HEK293T (cell line): ENCODE measurements at regions of chr11 and their contacts with region 1.

Region 1: GRCh38 chr11:65329944-65330403 is 3.7 kb upstream of the DPF2 start:
- DNase-seq: peak; percentile 69

Region 2: DNA sequence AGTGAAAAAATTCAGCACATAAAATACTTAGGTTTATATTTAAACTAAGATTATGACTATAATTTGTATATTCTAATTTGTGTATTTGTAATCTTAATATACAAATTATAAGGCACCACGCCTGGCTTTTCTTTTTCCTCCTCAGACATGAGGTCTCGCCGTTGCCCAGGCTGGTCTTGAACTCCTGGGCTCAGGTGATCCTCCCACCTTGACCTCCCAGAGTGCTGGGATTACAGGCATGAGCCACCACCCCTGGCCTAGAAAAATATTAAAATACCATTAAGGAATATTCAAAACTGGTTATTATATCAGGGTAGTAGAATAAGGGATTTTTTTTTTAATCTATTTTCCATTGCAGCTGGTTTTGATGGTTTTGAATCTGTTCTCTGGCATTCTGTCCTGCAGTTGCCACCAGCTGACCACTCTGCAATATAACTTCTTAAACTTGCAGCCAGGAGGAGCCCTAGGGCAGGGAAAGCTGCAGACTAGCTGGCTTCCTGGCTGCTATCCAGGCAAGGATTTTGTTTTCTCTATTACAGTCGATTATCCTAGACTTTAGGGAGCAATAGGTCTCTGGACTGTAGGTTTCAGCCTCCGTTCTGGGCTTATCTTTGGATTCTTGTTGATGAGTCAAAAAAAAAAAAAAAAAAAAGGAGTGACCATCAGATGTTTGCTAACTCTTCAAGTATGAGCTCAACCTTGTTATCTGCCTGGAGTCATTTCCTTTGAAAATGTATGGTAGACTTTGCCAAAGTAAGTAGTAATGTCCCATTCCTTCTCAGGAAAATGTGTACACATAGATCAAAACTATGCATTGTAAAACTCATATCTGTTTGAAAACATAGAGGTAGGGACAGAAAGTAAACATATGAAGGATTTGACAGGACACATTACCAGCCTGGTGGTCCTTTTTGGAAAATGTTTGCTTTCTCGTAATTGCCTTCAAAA is 55.0 kb before region 1 on chr11:
- CTCF ChIA-PET with region 1: interaction called, 17 read pairs
- POLR2A ChIA-PET with region 1: interaction called, 7 read pairs
- DNase-seq: peak; percentile 68

Region 3: GRCh38 chr11:65314501-65315203 is 15.3 kb before region 1 on chr11 and contains the start of gene CDC42EP2:
- CTCF ChIA-PET with region 1: interaction called, 60 read pairs
- POLR2A ChIA-PET with region 1: interaction called, 20 read pairs
- DNase-seq: peak; percentile 89

Region 4: DNA sequence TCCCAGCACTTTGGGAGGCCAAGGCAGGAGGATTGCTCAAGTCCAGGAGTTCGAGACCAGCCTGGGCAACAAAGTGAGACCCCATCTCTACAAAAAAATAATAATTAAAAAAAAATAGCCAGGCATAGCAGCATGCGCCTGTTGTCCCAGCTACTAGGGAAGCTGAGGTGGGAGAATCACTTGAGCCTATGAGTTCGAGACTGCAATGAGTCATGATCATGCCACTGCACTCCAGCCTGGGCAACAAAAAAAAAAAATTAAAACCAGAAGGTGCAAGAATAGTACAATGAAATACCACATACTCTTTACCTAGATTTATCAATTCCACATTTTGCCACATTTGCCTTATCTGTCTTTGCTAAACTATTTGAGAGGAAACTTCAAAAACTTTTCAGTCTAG is 11.9 kb after region 1 on chr11:
- CTCF ChIA-PET with region 1: interaction called, 5 read pairs
- POLR2A ChIA-PET with region 1: interaction called, 11 read pairs
- DNase-seq: no peak

Region 5: DNA sequence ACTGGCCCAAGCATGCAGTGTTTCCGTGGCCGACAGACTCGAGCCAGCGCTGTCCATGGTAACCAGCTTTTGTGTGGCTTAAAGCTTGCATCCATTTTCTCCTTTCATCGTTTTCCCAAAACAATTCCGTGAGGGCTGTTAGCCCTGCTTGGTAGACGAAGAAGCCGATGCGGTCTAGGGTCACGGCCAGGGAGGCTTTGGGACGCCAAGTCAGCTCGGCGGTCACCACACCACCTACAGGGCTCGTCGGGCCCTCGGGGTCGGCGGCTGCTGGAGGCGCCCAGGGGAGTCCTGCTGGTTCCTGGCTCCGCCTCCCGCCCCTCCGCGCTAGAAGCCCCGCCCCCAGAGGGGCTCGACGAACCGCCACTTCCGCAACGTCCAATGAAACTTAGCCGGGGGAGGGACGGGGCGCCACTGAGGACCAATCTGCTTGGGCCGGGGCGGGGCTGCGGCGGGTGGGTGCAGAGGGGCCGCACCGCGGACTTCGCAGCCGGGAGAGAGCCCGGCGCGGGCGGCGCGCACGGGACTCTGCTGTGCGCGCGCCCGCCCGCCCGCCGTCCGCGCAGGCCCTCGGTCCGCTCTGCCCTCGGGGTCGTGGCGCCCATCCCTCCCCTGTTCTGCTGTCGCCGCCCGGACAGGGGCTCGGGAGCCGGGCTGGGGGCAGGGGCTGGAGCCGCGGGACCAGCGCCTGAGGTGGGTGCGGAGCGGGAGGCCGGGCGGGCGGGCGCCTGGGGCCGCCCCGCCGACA is 24.5 kb after region 1 on chr11 and contains the start of gene TIGD3:
- CTCF ChIA-PET with region 1: interaction called, 5 read pairs
- POLR2A ChIA-PET with region 1: interaction called, 46 read pairs
- DNase-seq: peak; percentile 98